ENCODE measurements at regions of chr11 and their contacts with region 1.

Region 1: GRCh38 chr11:122781378-122782195 is 56.7 kb upstream of the CRTAM start:
- DNase-seq: peak; percentile 84
- H3K4me3 ChIP-seq: no peak overlapping the region; a peak in 1 of 4 replicates
- H3K27ac ChIP-seq: peak overlapping the region in 1 of 2 experiments; percentile 25; a peak in 1 of 4 replicates
- H3K4me1 ChIP-seq: peaks cover 12 to 30% of the 10 kb centered on the region in 2 experiments; a peak in 3 of 4 replicates
- H3K27me3 ChIP-seq: no peaks in the 10 kb centered on the region
- CTCF ChIP-seq: peak; percentile 94
- EP300 ChIP-seq: no peak
- RAD21 ChIP-seq: peak; percentile 96

Region 2: DNA sequence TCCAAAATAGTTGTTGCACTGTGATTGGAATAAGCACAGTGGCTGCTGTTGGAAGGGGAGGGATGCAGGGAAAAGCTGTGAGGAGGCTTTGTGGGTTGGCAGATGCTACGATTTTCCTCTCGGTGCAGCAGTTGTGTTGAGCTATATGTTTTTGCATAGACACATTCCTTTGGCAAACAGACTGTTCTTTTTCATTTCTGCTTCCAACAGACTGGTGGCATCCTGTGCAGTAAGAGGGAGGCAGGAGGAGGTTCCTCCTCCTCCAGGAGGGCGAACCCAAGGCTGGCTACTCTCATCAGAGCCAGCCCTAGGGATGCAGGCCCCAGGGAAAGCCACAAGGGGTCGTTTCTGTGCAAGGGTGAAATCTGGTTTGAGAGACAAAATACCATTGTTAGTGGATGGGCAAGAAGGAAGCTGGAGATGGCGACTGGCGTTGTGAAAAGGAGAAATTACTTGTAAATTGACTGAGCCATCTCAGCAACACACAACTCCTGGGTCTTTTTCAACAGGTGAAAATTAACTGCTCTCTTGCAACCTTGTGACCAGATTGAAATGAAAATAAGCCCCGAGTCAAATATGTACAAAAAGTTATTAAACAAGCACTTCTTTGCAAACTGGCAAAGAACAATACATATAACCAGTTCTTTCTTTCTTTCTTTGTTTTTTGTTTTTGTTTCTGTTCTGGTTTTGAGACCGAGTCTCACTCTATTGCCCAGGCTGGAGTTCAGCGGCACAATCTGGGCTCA is 152.6 kb before region 1 on chr11:
- CTCF ChIA-PET with region 1: interaction called, 99 read pairs
- POLR2A ChIA-PET with region 1: no interaction called
- DNase-seq: peak; percentile 82
- H3K4me3 ChIP-seq: no peak overlapping the region
- H3K27ac ChIP-seq: peak overlapping the region in 1 of 2 experiments; percentile 34; a peak in 2 of 4 replicates
- H3K4me1 ChIP-seq: no peaks in the 10 kb centered on the region; a peak in 2 of 4 replicates
- H3K27me3 ChIP-seq: no peaks in the 10 kb centered on the region
- CTCF ChIP-seq: peak; percentile 86
- EP300 ChIP-seq: no peak
- RAD21 ChIP-seq: peak; percentile 84

Region 3: GRCh38 chr11:122646549-122647340 is 134.8 kb before region 1 on chr11:
- CTCF ChIA-PET with region 1: interaction called, 15 read pairs
- POLR2A ChIA-PET with region 1: no interaction called
- DNase-seq: no peak
- H3K4me3 ChIP-seq: no peak overlapping the region
- H3K27ac ChIP-seq: peak overlapping the region in 1 of 2 experiments; percentile 70; a peak in 2 of 4 replicates
- H3K4me1 ChIP-seq: peaks cover 0 to 21% of the 10 kb centered on the region in 2 experiments; a peak in 2 of 4 replicates
- H3K27me3 ChIP-seq: no peaks in the 10 kb centered on the region
- CTCF ChIP-seq: no peak
- EP300 ChIP-seq: no peak
- RAD21 ChIP-seq: no peak

Region 4: GRCh38 chr11:122754553-122755322 is 26.8 kb before region 1 on chr11:
- CTCF ChIA-PET with region 1: interaction called, 34 read pairs
- POLR2A ChIA-PET with region 1: no interaction called
- DNase-seq: no peak
- H3K4me3 ChIP-seq: no peak overlapping the region
- H3K27ac ChIP-seq: no peak overlapping the region
- H3K4me1 ChIP-seq: peaks cover 14 to 19% of the 10 kb centered on the region in 2 experiments; a peak in 3 of 4 replicates
- H3K27me3 ChIP-seq: no peaks in the 10 kb centered on the region
- CTCF ChIP-seq: peak; percentile 56
- EP300 ChIP-seq: no peak
- RAD21 ChIP-seq: peak; percentile 44

Region 5: DNA sequence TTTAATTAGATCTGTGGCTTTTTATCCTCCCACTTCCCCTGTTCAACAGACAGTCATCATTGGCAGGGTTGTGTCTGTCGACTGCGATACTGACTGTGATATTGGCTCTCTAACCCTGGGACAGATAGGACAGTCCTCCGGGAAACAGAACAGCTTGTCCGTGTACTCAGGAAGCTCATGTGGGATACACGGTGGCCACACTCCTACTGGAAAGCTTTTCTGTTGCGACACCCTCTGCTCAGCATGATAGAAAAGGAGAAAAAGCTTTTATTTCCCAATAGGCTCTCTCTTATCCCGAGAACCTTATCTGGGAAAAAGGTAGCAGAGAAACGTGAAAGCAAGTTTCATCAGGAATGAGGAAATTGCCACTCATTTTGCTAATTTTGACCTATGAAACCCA is 340.8 kb after region 1 on chr11:
- CTCF ChIA-PET with region 1: no interaction called
- POLR2A ChIA-PET with region 1: no interaction called
- DNase-seq: peak; percentile 48
- H3K4me3 ChIP-seq: no peak overlapping the region
- H3K27ac ChIP-seq: peak overlapping the region; percentile 66 to 77
- H3K4me1 ChIP-seq: peaks cover 9 to 28% of the 10 kb centered on the region in 2 experiments; a peak in 2 of 4 replicates
- H3K27me3 ChIP-seq: no peaks in the 10 kb centered on the region
- CTCF ChIP-seq: no peak
- EP300 ChIP-seq: no peak
- RAD21 ChIP-seq: no peak